Activated CD8-positive, alpha-beta T cell treated with anti-CD3 and anti-CD28 coated beads, Interleukin-2, amount 10 ng/mL, durations not matched to agents 7 days and 5 days (primary cell): ENCODE measurements at regions of chr20 and their contacts with region 1.

Region 1: DNA sequence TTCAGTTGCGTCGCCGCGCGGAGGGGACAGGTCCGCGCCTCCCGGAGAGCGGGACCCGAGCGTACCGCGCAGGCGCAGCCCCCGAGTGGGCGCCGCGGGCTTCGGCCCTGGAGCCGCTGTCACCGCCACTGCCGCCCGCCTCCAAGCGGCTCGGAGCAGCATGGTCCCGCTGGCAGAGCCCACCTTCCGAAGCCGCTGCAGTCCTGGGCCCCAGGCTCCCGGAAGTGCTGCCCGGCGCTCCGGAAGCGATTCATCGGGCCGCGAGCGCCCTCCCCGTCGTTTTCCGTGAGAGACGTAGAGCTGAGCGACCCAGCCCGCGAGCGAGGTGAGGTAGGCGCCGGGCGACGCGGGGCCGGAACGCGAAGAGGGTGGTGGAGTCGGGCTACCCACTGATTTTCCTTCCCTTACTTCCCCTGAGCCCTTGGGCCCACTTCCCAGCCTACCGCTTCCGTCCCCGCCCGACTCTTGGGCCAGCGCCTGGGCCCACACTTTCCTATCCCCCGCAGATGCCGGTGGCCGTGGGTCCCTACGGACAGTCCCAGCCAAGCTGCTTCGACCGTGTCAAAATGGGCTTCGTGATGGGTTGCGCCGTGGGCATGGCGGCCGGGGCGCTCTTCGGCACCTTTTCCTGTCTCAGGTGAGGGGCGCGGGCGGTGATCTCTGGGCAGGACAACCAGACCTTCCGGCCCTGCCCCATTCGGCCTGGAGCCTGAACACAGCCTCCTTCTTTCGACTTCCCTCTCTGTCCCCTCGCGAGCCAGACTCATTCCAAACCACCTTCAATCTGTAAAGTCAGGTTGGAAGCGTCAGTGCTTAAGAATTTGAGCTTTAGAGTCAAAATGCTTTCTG is at the starts of genes NFS1 and ROMO1:
- DNase-seq: peak; percentile 91
- ATAC-seq: peak; percentile 88
- H3K4me3 Mint-ChIP-seq: peak within 1 kb of the TSS; percentile 84
- H3K27ac Mint-ChIP-seq: peak within 1 kb of the TSS; percentile 99
- H3K4me1 Mint-ChIP-seq: peaks cover 49% of the 10 kb centered on the region
- H3K27me3 Mint-ChIP-seq: no peaks in the 10 kb centered on the region
- total RNA-seq, gene NFS1: 32.7 to 34.7 TPM
- total RNA-seq, gene ROMO1: 134 to 143 TPM

Region 2: GRCh38 chr20:35664544-35665221 is 34.7 kb before region 1 on chr20 and contains the starts of genes CPNE1 and RBM12:
- CTCF ChIA-PET with region 1: interaction called, 4 read pairs
- POLR2A ChIA-PET with region 1: interaction called, 13 read pairs
- DNase-seq: peak; percentile 96
- ATAC-seq: peak; percentile 80
- H3K4me3 Mint-ChIP-seq: peak within 1 kb of the TSS; percentile 96
- H3K27ac Mint-ChIP-seq: peak within 1 kb of the TSS; percentile 99
- H3K4me1 Mint-ChIP-seq: peaks cover 38% of the 10 kb centered on the region
- H3K27me3 Mint-ChIP-seq: no peaks in the 10 kb centered on the region
- total RNA-seq, gene CPNE1: 271 to 272 TPM
- total RNA-seq, gene RBM12: 112 to 119 TPM

Region 3: DNA sequence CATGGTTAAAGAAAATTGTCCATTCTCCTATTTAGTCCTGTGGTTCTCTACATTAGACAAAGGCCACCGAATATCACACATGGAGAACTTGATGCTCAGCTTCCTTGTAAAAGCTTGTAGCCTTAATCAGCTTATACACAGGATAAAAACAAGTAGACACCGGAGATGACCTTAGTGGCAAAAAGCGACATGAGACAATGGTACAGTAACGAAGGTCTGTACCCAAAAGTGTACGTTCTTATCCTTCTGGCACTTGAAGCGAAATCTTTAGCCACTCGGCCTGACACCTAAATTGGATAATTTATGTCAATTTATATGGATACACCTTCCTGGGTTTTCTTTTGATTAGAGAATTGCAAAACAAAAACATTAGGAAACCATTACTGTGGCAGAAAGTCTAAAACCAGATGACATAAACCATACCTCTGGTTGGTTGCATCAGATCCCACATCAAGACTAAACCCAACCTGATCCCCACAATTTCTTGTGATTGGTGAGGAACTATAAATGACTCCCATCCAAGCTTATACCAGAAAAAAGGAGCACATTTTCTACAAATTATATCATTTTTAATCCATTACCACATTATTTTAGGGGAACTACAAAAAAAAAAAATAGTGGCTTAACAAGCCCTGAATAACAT is 36.6 kb after region 1 on chr20:
- CTCF ChIA-PET with region 1: interaction called, 4 read pairs
- POLR2A ChIA-PET with region 1: interaction called, 15 read pairs
- DNase-seq: no peak
- ATAC-seq: no peak
- H3K4me3 Mint-ChIP-seq: peak overlapping the region; percentile 56
- H3K27ac Mint-ChIP-seq: peak overlapping the region; percentile 53
- H3K4me1 Mint-ChIP-seq: peaks cover 64% of the 10 kb centered on the region
- H3K27me3 Mint-ChIP-seq: no peaks in the 10 kb centered on the region

Region 4: GRCh38 chr20:36153736-36154699 is 454.7 kb after region 1 on chr20:
- CTCF ChIA-PET with region 1: no interaction called
- POLR2A ChIA-PET with region 1: no interaction called
- DNase-seq: no peak
- ATAC-seq: peak; percentile 67
- H3K4me3 Mint-ChIP-seq: no peak overlapping the region
- H3K27ac Mint-ChIP-seq: no peak overlapping the region
- H3K4me1 Mint-ChIP-seq: no peaks in the 10 kb centered on the region
- H3K27me3 Mint-ChIP-seq: peaks cover 35% of the 10 kb centered on the region